Breast epithelium (tissue), 4 donors: ENCODE measurements at regions of chr2 and their contacts with region 1.

Region 1: DNA sequence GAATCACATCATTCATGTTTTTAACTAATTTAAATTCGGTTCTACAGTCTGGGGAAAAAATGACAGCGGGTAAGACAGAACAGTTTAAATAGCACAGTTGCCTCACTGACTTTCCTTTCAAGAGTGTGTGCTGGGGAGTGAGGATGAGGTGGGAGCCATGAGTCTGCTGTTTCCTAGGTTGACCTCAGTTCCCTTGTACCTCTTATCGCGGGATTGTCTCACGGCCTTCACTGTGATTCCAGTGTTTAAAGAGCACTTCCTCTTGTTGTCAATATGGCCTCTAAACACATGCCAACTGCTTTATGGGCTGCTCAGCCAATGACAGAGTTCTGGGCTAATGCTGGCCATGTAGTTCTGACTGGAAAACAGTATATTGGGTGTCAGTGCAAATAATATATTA is 41.6 kb upstream of the ALMS1 start:
- DNase-seq: no peak
- H3K4me3 ChIP-seq: no peak overlapping the region
- H3K27ac ChIP-seq: no peak overlapping the region
- H3K4me1 ChIP-seq: no peaks in the 10 kb centered on the region
- H3K27me3 ChIP-seq: no peaks in the 10 kb centered on the region
- CTCF ChIP-seq: no peak
- POLR2A ChIP-seq: no peak

Region 2: DNA sequence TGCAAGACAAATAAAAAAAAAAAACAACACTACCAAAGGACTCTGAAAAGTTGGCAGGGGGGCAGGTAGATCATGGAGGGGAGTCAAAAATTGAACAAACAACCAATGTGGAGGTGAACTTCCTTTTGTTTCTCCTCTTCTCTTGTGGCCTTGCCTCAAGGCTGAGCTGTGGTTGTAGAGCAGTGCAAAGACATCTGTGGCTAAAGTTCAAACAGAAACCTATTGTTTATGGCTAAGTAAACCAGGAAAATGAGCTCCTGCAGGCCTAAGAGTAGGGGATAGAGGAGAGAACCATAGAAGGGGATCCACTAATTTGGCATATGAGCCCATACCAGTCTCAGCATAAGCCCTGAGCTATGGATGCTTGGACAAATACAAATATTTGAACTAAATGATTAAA is 10.4 kb before region 1 on chr2:
- intact Hi-C with region 1: no loop called
- DNase-seq: no peak
- H3K4me3 ChIP-seq: no peak overlapping the region
- H3K27ac ChIP-seq: no peak overlapping the region
- H3K4me1 ChIP-seq: no peaks in the 10 kb centered on the region
- H3K27me3 ChIP-seq: no peaks in the 10 kb centered on the region
- CTCF ChIP-seq: no peak
- POLR2A ChIP-seq: no peak

Region 3: GRCh38 chr2:73404409-73404808 is 60.4 kb after region 1 on chr2:
- intact Hi-C with region 1: loop called (anchors 2 kb)
- DNase-seq: no peak
- H3K4me3 ChIP-seq: no peak overlapping the region
- H3K27ac ChIP-seq: no peak overlapping the region
- H3K4me1 ChIP-seq: no peaks in the 10 kb centered on the region
- H3K27me3 ChIP-seq: no peaks in the 10 kb centered on the region
- CTCF ChIP-seq: no peak
- POLR2A ChIP-seq: no peak

Region 4: GRCh38 chr2:73414696-73415095 is 70.7 kb after region 1 on chr2:
- intact Hi-C with region 1: no loop called
- DNase-seq: no peak
- H3K4me3 ChIP-seq: no peak overlapping the region
- H3K27ac ChIP-seq: no peak overlapping the region
- H3K4me1 ChIP-seq: no peaks in the 10 kb centered on the region
- H3K27me3 ChIP-seq: no peaks in the 10 kb centered on the region
- CTCF ChIP-seq: no peak
- POLR2A ChIP-seq: no peak